ENCODE measurements at regions of chr10 and their contacts with region 1.

Region 1: DNA sequence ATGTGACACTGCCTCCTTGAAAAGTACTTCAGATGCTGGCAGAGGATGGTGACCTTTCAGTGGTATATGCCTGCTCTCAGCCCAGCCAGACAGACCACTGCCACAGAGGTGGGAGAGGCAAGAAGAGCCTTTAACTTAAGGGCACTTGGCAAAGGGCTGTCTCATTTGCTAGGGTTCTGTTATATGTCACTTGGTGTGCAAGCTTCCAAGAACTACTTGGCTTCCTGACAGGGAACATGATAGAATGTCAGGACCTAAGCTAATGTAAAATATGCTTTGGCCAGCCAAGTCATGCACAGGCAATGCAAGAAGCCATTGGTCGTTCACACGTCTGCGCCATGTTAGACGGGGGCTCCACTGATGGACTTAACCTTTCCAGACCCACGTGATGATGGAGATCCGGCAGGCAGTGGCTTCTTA is 54.7 kb downstream of the RBM20 start:
- DNase-seq: no peak
- ATAC-seq: no peak
- H3K4me3 ChIP-seq: no peak overlapping the region
- H3K27ac ChIP-seq: peak overlapping the region in 1 of 2 donors; percentile 15
- H3K4me1 ChIP-seq: no peaks in the 10 kb centered on the region
- H3K27me3 ChIP-seq: no peaks in the 10 kb centered on the region

Region 2: GRCh38 chr10:110522365-110522988 is 176.3 kb before region 1 on chr10:
- intact Hi-C with region 1: no loop called
- DNase-seq: no peak
- ATAC-seq: no peak
- H3K4me3 ChIP-seq: no peak overlapping the region
- H3K27ac ChIP-seq: no peak overlapping the region
- H3K4me1 ChIP-seq: peaks cover 0 to 2% of the 10 kb centered on the region in 2 donors
- H3K27me3 ChIP-seq: no peaks in the 10 kb centered on the region

Region 3: GRCh38 chr10:110733218-110733952 is 34.6 kb after region 1 on chr10:
- intact Hi-C with region 1: loop called in 1 of 2 experiments (anchors 5 kb)
- DNase-seq: peak in 1 of 2 donors; percentile 61
- ATAC-seq: peak; percentile 63
- H3K4me3 ChIP-seq: peak overlapping the region; percentile 78 to 92
- H3K27ac ChIP-seq: peak overlapping the region in 1 of 2 donors; percentile 74
- H3K4me1 ChIP-seq: peaks cover 0 to 6% of the 10 kb centered on the region in 2 donors
- H3K27me3 ChIP-seq: no peaks in the 10 kb centered on the region

Region 4: GRCh38 chr10:111093741-111094380 is 395.1 kb after region 1 on chr10:
- intact Hi-C with region 1: no loop called
- DNase-seq: no peak
- ATAC-seq: no peak
- H3K4me3 ChIP-seq: no peak overlapping the region
- H3K27ac ChIP-seq: no peak overlapping the region
- H3K4me1 ChIP-seq: no peaks in the 10 kb centered on the region
- H3K27me3 ChIP-seq: peaks cover 0 to 2% of the 10 kb centered on the region in 2 donors